ENCODE measurements at regions of chr14 and their contacts with region 1.

Region 1: GRCh38 chr14:24310646-24311604 is at the start of gene LTB4R:
- DNase-seq: peak; percentile 76
- H3K4me3 Mint-ChIP-seq: peak within 1 kb of the TSS; percentile 87
- H3K27ac Mint-ChIP-seq: peak within 1 kb of the TSS; percentile 96
- H3K4me1 Mint-ChIP-seq: peaks cover 75% of the 10 kb centered on the region
- H3K27me3 Mint-ChIP-seq: no peaks in the 10 kb centered on the region
- total RNA-seq, gene LTB4R: 36.1 to 37.9 TPM

Region 2: DNA sequence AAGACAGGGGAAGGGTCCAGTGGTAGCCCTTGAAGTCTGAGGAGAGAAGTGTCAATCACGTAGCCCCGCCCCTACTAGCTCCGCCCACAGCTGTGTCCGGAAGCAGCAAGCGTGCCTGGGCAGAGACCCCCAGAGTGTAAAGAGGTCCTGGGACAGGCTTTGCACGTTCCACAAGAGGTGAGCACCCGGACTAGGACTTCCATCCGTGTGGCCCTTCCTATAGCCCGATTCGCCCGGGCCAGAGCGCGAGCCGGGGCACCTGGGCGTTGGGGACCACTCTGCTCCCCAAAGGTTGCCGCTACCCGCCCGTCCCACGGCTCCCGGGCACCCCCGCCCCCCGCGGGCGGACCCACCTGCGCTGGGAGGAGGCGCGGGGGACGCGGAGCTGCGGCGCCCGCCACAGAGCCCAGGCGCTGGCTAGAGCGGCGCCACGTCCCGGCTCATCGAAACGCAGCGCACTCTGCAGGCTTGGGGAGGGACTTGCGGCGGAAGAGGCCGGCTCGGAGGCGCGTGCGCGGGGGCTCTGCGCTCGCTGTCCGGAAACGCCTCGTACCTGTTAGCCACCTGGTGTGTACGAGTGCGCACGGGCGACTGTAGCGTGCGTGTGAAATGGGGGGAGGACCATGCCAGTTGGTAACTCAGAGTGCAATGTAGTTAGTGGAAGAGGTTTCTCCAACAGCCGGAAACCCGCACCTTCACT is 39.6 kb before region 1 on chr14 and contains the start of gene RABGGTA:
- CTCF ChIA-PET with region 1: interaction called, 16 read pairs
- POLR2A ChIA-PET with region 1: interaction called, 12 read pairs
- DNase-seq: peak; percentile 90
- H3K4me3 Mint-ChIP-seq: peak within 1 kb of the TSS; percentile 86
- H3K27ac Mint-ChIP-seq: peak within 1 kb of the TSS; percentile 92
- H3K4me1 Mint-ChIP-seq: peaks cover 43% of the 10 kb centered on the region
- H3K27me3 Mint-ChIP-seq: no peaks in the 10 kb centered on the region
- total RNA-seq, gene RABGGTA: 40.2 to 41.0 TPM

Region 3: GRCh38 chr14:24289649-24290249 is 21.2 kb before region 1 on chr14:
- CTCF ChIA-PET with region 1: interaction called, 92 read pairs
- POLR2A ChIA-PET with region 1: no interaction called
- DNase-seq: peak; percentile 76
- H3K4me3 Mint-ChIP-seq: no peak overlapping the region
- H3K27ac Mint-ChIP-seq: no peak overlapping the region
- H3K4me1 Mint-ChIP-seq: peaks cover 23% of the 10 kb centered on the region
- H3K27me3 Mint-ChIP-seq: peaks cover 22% of the 10 kb centered on the region

Region 4: DNA sequence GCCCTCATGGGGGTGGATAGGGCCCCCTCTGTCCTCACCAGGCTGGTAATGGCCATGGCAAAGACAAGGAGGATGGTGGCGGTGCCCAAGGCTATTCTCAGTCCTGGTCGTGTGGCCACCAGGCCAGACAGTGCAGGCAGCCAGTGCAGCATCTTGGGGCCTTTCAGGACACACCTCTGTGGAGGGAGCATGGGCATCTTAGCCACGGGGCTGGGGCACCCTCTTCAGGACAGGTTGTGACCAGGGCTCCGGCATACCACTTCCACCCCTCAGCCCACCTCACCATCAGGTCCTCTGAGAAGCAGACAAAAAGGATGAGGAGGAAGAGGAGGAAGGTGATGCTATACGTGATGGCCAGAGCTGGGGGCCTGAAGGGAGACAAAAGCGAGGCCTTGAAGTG is 13.1 kb after region 1 on chr14:
- CTCF ChIA-PET with region 1: interaction called, 144 read pairs
- POLR2A ChIA-PET with region 1: interaction called, 65 read pairs
- DNase-seq: no peak
- H3K4me3 Mint-ChIP-seq: no peak overlapping the region
- H3K27ac Mint-ChIP-seq: no peak overlapping the region
- H3K4me1 Mint-ChIP-seq: peaks cover 24% of the 10 kb centered on the region
- H3K27me3 Mint-ChIP-seq: peaks cover 17% of the 10 kb centered on the region